Heart left ventricle (tissue), 16 donors: ENCODE measurements at regions of chr17 and their contacts with region 1.

Region 1: DNA sequence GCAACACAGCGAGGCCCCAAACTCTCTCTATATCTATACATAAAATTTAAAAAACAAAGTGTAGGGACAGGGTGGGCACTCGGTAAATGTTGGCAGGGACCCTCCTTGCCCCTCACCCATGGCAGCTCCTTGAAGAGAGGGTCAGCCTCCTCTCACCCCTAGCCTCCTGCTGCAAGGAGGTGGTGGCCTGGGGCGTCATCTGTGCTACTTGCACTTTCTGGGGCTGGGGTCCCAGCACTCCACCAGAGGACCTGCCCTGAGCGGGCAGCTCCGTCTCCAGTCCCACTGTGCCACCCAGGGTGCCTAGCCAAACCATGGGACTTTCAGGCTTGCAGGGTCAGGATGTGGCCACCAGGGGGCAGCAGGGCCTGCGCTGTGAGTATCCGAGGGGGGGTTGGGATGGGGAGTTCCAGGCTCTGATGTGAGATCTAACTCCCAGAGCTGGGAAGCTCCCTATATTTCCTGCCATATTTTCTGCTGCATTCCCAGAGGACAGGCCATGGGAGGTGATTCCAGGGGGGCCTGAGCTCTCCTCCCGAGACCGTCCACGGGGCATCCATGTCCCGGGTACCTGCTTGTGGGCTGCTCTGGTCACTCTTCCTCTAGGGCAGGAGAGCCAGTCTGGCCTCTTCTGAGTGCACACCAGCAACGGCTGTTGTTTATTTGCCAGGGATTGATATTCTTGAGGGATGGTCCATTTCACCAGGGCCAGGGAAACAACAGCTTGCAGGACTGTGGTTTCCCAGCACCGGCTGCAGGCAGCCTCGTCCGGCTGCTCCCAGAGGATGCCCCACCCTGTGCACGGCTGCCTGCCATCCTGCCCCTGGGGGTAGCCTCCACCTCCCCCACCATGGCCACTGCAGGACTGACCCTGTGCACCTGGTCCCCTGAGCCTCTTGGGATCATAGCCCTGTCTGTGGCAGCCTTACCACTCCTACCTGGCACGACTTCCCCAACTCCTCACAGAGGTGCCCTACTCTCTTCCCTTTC is 1.1 kb downstream of the GPR142 start:
- DNase-seq: peak; percentile 70 to 85 (median 76)
- ATAC-seq: peak; percentile 64 to 86 (median 78)
- H3K4me3 ChIP-seq: peak overlapping the region in 6 of 12 donors; percentile 5 to 19 (median 14)
- H3K27ac ChIP-seq: no peak overlapping the region
- H3K4me1 ChIP-seq: peaks cover 0 to 18% (median 8%) of the 10 kb centered on the region in 12 donors
- H3K27me3 ChIP-seq: peaks cover 0 to 6% (median 0%) of the 10 kb centered on the region in 9 donors
- CTCF ChIP-seq: peak; percentile 85 to 97 (median 90)
- POLR2A ChIP-seq: no peak

Region 2: DNA sequence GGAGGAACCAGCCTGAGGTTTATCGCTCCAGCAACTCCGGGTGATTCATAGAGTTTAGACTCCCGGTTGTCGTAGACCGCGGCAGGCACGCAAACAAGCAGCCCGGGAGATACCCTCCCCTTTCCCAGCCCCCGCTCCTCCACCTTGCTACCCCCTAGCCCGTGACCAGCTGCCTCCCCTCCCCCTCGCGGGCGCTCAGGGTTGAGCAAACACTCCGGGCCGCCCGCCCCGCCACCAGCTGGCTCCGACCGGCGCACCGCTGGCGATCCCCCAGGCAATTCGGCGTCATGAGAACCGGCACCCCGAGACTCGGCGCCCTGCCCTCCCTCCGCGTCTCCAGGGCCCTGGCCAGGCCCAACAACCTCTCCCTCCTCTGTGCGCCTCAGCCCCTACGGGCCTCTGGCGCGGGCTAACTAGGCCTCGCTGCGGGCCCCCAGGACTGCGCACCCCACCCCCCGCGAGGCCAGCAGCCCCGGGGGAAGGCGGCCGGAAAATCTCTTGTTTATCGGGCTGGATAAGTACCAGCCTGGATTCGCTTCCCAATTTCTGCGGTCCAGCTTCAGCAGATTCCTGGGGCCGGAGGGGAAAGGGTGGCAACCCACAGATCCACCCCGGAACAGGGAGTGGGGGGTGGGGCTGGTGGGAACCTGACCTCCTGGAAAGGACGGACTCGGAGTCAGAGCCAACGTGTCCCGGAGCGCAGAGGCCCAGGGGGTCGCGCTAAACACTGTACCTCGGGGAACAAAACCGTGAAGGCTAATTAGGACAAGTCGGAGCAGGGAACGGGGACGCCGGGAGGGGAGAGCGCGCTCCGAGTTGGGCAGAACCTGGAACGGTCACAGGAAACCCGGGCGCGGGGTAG is 62.5 kb after region 1 on chr17:
- intact Hi-C with region 1: no loop called
- DNase-seq: peak; percentile 83 to 90 (median 87)
- ATAC-seq: peak; percentile 59 to 76 (median 74)
- H3K4me3 ChIP-seq: peak overlapping the region; percentile 48 to 90 (median 69)
- H3K27ac ChIP-seq: peak overlapping the region; percentile 87 to 99 (median 96)
- H3K4me1 ChIP-seq: peaks cover 0 to 71% (median 36%) of the 10 kb centered on the region in 12 donors
- H3K27me3 ChIP-seq: peaks cover 0 to 49% (median 0%) of the 10 kb centered on the region in 9 donors
- CTCF ChIP-seq: no peak
- POLR2A ChIP-seq: peak in 1 of 2 donors; percentile 32

Region 3: GRCh38 chr17:74467221-74467951 is 99.0 kb after region 1 on chr17:
- intact Hi-C with region 1: no loop called
- DNase-seq: peak in 1 of 5 donors; percentile 63
- ATAC-seq: peak in 3 of 4 donors; percentile 39 to 62 (median 60)
- H3K4me3 ChIP-seq: peak overlapping the region in 8 of 12 donors; percentile 7 to 66 (median 46)
- H3K27ac ChIP-seq: peak overlapping the region in 2 of 12 donors; percentile 40 to 91
- H3K4me1 ChIP-seq: peaks cover 0 to 48% (median 4%) of the 10 kb centered on the region in 12 donors
- H3K27me3 ChIP-seq: peaks cover 0 to 33% (median 12%) of the 10 kb centered on the region in 9 donors
- CTCF ChIP-seq: no peak
- POLR2A ChIP-seq: no peak

Region 4: DNA sequence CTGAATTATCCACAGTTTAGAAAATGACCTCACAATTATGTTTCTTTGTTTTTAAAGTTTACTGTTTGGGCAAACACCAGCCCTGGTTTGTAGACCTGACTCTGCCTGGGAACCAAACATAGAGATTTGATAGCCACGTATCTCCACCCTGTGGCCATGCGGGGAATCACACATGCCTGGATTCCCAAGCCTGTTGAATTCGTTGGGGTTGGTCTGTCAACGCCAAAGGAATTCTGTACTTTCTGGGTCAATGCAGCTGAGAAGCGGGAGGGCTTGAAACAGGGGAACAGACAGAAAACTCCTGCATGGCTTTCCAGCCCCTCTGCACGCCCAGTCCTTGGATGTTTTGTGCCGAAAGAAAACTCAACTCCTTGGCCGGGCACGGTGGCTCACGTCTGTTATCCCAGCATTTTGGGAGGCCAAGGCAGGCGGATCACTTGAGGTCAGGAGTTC is 125.0 kb after region 1 on chr17:
- intact Hi-C with region 1: loop called in 9 of 10 experiments (anchors 1 to 5 kb)
- DNase-seq: peak; percentile 58 to 81 (median 61)
- ATAC-seq: peak in 3 of 4 donors; percentile 80 to 86 (median 81)
- H3K4me3 ChIP-seq: no peak overlapping the region
- H3K27ac ChIP-seq: no peak overlapping the region
- H3K4me1 ChIP-seq: peaks cover 0 to 4% (median 0%) of the 10 kb centered on the region in 12 donors
- H3K27me3 ChIP-seq: peaks cover 0 to 8% (median 0%) of the 10 kb centered on the region in 9 donors
- CTCF ChIP-seq: peak; percentile 75 to 92 (median 84)
- POLR2A ChIP-seq: no peak